ENCODE measurements at regions of chr17 and their contacts with region 1.

Region 1: DNA sequence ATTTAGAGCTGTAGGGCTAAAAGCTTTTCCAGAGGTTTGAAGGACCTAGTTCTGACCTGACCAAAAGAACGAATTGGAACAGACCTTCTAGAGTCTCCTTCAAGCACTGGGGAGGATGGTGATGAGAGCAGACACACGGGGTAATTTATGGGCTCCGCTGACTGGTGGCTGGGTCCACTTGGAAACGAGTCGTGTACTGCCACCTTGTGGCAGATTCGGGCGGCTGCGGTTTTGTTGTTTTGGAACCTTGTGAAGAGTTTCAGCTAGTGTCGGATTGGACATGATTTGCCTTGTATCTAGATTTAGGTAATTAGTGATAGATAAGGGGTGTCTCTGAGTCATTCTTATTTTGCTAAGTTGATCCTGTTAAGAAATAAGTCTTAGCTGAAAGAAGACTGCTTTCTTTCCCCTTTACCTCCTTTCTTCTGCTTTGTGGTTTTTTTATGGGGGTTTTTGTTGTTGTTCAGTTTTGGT is 98.9 kb downstream of the AATF start:
- DNase-seq: peak; percentile 80 to 87
- ATAC-seq: peak; percentile 82 to 90
- H3K4me3 ChIP-seq: no peak overlapping the region
- H3K27ac ChIP-seq: no peak overlapping the region
- H3K4me1 ChIP-seq: peaks cover 4% of the 10 kb centered on the region; the same call in 2 of the 3 replicates
- CTCF ChIP-seq: peak; percentile 98
- EP300 ChIP-seq: no peak
- POLR2A ChIP-seq: no peak
- RAD21 ChIP-seq: peak; percentile 96 to 97

Region 2: DNA sequence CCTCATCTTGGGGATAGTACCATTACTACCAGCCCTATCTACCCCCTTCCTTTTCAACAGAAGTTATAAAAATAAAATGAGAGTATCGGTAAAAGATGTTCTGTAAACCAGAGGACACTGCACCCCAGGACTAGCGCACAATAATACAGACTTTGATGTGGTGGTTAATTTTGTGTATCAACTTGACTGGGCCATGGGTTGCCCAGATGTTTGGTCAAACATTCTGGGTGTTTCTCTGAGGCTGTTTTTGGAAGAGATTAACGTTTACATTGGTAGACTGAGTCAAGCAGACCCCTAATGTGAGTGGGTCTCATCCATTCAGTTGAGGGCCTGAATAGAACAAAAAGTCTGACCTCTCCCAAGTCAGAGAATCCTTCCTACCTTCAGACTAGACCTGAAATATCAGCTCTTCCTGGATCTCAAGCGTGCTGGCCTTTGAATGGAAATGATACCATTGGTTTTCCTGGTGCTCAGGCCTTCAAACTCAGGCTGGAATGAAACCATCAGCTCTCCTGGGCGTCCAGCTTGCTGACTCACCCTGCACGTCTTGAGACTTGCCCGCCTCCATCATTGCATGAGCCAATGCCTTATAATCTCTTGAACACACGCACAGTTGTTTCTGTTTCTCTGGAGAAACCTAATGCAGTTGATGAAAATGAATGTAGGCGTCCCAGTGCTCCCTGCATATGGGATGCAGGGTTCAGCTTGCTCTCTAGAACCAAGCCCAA is 436.2 kb before region 1 on chr17:
- CTCF ChIA-PET with region 1: interaction called, 30 read pairs
- POLR2A ChIA-PET with region 1: no interaction called
- DNase-seq: peak in 1 of 2 experiments; percentile 61
- ATAC-seq: peak in 1 of 2 experiments; percentile 33; a peak in 2 of 6 replicates
- H3K4me3 ChIP-seq: no peak overlapping the region
- H3K27ac ChIP-seq: peak overlapping the region in 1 of 2 experiments; percentile 27; a peak in 1 of 6 replicates
- H3K4me1 ChIP-seq: peaks cover 23% of the 10 kb centered on the region
- CTCF ChIP-seq: no peak
- EP300 ChIP-seq: no peak
- POLR2A ChIP-seq: no peak
- RAD21 ChIP-seq: no peak

Region 3: GRCh38 chr17:36705874-36706731 is 341.6 kb before region 1 on chr17:
- CTCF ChIA-PET with region 1: interaction called, 45 read pairs
- POLR2A ChIA-PET with region 1: no interaction called
- DNase-seq: peak; percentile 72 to 89
- ATAC-seq: peak; percentile 84 to 94
- H3K4me3 ChIP-seq: no peak overlapping the region
- H3K27ac ChIP-seq: no peak overlapping the region
- H3K4me1 ChIP-seq: no peaks in the 10 kb centered on the region
- CTCF ChIP-seq: peak; percentile 81
- EP300 ChIP-seq: no peak
- POLR2A ChIP-seq: 0 out of 2 replicates have a peak, but pooled peaks have one; percentile 10
- RAD21 ChIP-seq: peak; percentile 76 to 83

Region 4: DNA sequence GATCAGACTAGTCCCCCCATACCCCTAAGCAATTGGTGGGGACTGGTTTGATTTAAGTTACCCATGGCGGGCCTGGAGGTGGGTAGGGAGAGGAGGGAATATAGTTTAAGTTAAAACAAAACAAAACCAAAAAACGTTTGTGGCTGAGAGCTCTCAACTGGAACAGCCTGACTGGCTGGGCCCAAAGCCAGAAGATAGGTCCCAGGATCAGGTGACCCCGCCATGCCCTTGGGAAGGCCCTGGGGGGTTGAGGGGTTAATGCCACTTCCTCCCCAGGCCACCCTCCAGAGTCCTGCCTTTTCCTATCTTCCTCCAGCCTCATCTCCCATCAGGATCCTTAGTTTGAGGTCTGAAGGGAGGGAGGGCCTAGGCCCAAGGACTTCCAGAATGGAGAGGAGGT is 192.7 kb before region 1 on chr17:
- CTCF ChIA-PET with region 1: no interaction called
- POLR2A ChIA-PET with region 1: no interaction called
- DNase-seq: no peak
- ATAC-seq: no peak
- H3K4me3 ChIP-seq: no peak overlapping the region
- H3K27ac ChIP-seq: no peak overlapping the region
- H3K4me1 ChIP-seq: peaks cover 31% of the 10 kb centered on the region
- CTCF ChIP-seq: no peak
- EP300 ChIP-seq: no peak
- POLR2A ChIP-seq: no peak
- RAD21 ChIP-seq: no peak

Region 5: GRCh38 chr17:36948717-36949460 is 98.8 kb before region 1 on chr17 and contains the start of gene AATF:
- CTCF ChIA-PET with region 1: interaction called, 10 read pairs
- POLR2A ChIA-PET with region 1: interaction called, 3 read pairs
- DNase-seq: peak; percentile 98 to 99
- ATAC-seq: peak; percentile 92 to 98
- H3K4me3 ChIP-seq: peak within 1 kb of the TSS; percentile 73
- H3K27ac ChIP-seq: peak within 1 kb of the TSS; percentile 90
- H3K4me1 ChIP-seq: peaks cover 25% of the 10 kb centered on the region
- CTCF ChIP-seq: no peak
- EP300 ChIP-seq: no peak
- POLR2A ChIP-seq: peak; percentile 88
- RAD21 ChIP-seq: no peak; a peak in 1 of 5 replicates
- polyA plus RNA-seq, gene AATF: 51.9 and 63.8 TPM in 2 replicates

Region 6: DNA sequence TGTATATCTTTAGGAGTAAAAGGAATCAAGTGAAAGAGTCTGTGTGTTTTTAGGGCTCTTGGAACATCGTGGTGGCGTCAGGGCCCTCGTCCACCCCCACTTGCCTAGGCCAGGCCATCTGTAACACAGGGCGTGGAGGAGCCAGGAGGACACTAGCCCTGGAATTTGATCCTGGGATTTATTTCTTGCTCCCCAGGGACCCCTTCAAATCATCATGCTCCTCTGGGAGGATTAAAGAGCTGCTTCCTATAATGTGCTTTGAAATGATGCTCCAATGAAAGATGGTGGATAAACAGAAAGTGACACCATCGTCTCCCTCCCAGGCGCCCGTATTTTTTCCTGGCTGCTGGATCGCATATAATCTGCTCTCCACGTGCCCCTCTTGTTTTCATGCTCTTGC is 14.4 kb after region 1 on chr17:
- CTCF ChIA-PET with region 1: interaction called, 118 read pairs
- POLR2A ChIA-PET with region 1: no interaction called
- DNase-seq: no peak
- ATAC-seq: no peak
- H3K4me3 ChIP-seq: no peak overlapping the region
- H3K27ac ChIP-seq: no peak overlapping the region
- H3K4me1 ChIP-seq: peaks cover under 1% of the 10 kb centered on the region
- CTCF ChIP-seq: no peak
- EP300 ChIP-seq: no peak
- POLR2A ChIP-seq: no peak
- RAD21 ChIP-seq: no peak

Region 7: DNA sequence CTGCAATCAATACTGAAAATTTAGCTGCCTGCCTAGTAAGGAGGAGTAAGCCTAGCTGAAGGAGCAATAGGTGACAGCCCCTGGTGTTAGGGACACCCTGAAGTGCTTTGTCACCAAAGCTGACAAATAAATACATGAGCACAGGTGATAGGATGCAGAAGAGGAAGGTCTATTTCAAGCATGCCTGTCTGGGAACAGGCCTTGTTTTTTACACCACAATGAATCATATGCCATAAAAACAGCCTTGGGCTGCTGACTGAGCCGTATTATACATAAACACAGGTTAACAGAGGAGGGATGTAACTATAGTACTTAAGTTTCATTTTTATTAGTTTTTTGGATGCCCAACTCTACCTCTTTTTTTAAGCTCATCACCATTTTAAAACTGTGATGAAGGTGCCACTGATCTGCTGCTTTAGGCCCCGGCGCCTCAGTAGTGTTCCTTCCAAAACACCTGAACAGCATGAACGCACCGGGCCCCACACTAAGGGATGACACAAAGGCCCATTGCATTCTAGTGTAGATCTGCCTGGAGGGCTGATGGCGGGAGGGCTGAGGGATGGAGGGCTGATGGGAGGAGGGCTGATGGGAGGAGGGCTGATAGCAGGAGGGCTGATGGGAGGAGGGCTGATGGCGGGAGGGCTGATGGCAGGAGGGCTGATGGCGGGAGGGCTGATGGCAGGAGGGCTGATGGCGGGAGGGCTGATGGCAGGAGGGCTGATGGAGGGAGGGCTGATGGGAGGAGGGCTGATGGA is 51.4 kb after region 1 on chr17:
- CTCF ChIA-PET with region 1: interaction called, 14 read pairs
- POLR2A ChIA-PET with region 1: no interaction called
- DNase-seq: no peak
- ATAC-seq: no peak
- H3K4me3 ChIP-seq: no peak overlapping the region
- H3K27ac ChIP-seq: no peak overlapping the region
- H3K4me1 ChIP-seq: no peaks in the 10 kb centered on the region
- CTCF ChIP-seq: no peak
- EP300 ChIP-seq: no peak
- POLR2A ChIP-seq: no peak
- RAD21 ChIP-seq: no peak

Measured in A549 (cell line).